Activated CD4-positive, alpha-beta T cell treated with anti-CD3 and anti-CD28 coated beads, Interleukin-2, amount 10 ng/mL, durations not matched to agents 24 days and 14 days (primary cell): ENCODE measurements at regions of chr16 and their contacts with region 1.

Region 1: DNA sequence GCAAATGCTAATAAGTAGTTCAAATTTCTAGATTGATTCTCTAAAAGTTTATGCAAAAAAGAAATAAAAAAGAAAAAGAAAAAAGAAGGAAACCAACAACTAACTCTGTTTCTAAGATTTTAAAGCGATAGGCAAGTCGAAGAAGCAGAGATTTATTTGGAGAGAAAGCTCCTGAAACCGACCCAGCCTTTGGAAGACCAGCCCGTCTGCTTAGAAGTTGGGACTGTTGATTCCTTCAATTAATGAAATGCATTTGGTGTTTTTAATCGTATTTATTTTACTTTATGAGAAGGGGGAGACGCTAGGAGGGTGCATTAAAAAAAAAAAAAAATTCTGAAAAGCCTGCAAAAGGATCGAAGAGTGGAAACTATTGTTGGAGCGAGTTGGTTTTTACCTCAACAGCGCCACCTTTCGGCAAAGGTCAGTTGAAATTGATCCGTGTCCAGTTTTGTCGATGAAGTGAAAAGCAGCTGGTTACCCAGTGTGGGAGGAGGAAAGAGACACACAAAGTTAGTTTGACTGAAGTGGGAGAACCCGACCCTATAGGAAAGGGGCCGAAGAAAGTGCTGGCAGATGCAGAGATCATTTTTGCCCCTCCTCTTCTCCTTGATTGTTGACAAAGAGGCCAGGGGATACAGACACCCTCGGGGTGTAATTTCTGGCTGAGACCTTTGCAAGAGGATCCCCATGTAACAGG is 1.5 kb upstream of the MAF start:
- DNase-seq: peak; percentile 95
- H3K4me3 Mint-ChIP-seq: peak overlapping the region; percentile 99
- H3K27ac Mint-ChIP-seq: peak overlapping the region; percentile 99
- H3K4me1 Mint-ChIP-seq: peaks cover 47% of the 10 kb centered on the region
- H3K27me3 Mint-ChIP-seq: peaks cover 8% of the 10 kb centered on the region

Region 2: GRCh38 chr16:78742501-78743283 is 859.4 kb before region 1 on chr16:
- intact Hi-C with region 1: loop called (anchors 1 kb)
- DNase-seq: peak; percentile 91
- H3K4me3 Mint-ChIP-seq: peak overlapping the region; percentile 66
- H3K27ac Mint-ChIP-seq: peak overlapping the region; percentile 87
- H3K4me1 Mint-ChIP-seq: peaks cover 18% of the 10 kb centered on the region
- H3K27me3 Mint-ChIP-seq: no peaks in the 10 kb centered on the region

Region 3: GRCh38 chr16:79071424-79071823 is 530.7 kb before region 1 on chr16:
- intact Hi-C with region 1: loop called (anchors 2 kb)
- DNase-seq: no peak
- H3K4me3 Mint-ChIP-seq: no peak overlapping the region
- H3K27ac Mint-ChIP-seq: no peak overlapping the region
- H3K4me1 Mint-ChIP-seq: peaks cover 56% of the 10 kb centered on the region
- H3K27me3 Mint-ChIP-seq: no peaks in the 10 kb centered on the region

Region 4: DNA sequence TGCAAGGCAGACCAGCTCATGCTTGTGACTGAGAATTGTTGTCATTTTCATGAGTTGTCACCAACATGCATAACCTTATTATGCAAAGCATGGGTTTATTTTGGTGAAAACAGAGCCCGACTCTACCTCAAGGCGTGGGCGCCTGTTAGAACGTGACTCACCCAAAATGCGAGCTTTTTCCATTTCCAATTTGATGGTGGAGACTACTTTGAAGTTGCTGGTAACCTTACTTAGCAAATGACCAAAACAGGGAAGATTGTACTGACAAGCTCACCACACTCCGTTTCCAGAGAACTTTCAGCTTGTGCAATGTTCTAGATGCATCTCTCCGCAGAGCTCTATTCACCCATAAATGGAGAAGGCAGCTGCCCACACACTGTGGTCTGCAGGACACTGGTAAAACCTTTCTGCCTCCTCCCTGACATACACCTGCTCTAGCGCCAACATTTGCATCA is 286.0 kb before region 1 on chr16:
- intact Hi-C with region 1: loop called (anchors 1 kb)
- DNase-seq: peak; percentile 84
- H3K4me3 Mint-ChIP-seq: peak overlapping the region; percentile 68
- H3K27ac Mint-ChIP-seq: peak overlapping the region; percentile 87
- H3K4me1 Mint-ChIP-seq: peaks cover 31% of the 10 kb centered on the region
- H3K27me3 Mint-ChIP-seq: peaks cover 25% of the 10 kb centered on the region

Region 5: GRCh38 chr16:79770244-79771064 is 168.4 kb after region 1 on chr16:
- intact Hi-C with region 1: loop called (anchors 5 kb)
- DNase-seq: peak; percentile 93
- H3K4me3 Mint-ChIP-seq: peak overlapping the region; percentile 97
- H3K27ac Mint-ChIP-seq: peak overlapping the region; percentile 90
- H3K4me1 Mint-ChIP-seq: peaks cover 32% of the 10 kb centered on the region
- H3K27me3 Mint-ChIP-seq: peaks cover 26% of the 10 kb centered on the region

Region 6: DNA sequence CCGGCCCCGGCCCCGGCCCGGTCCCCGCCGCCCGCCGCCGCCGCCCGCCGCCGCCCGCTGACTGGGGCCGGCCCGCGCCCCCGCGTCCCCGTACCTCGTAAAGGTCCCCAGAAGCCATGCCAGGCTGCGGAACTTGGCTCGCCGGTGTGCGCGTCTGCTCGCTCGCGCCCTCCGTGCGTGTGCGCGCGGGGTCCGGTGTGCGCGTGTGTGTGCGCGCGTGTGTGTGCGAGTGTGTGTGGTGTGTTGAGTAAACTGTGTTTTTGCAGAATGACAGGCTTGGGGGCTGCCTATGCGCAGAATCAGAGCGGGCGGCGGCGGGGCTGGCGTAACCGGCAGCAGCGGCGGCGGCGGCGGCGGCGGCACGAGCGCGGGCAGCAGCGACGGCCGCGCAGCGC is 1202.0 kb after region 1 on chr16:
- intact Hi-C with region 1: loop called (anchors 2 kb)
- DNase-seq: peak; percentile 89
- H3K4me3 Mint-ChIP-seq: peak overlapping the region; percentile 93
- H3K27ac Mint-ChIP-seq: peak overlapping the region; percentile 97
- H3K4me1 Mint-ChIP-seq: peaks cover 45% of the 10 kb centered on the region
- H3K27me3 Mint-ChIP-seq: no peaks in the 10 kb centered on the region